Thyroid gland (tissue), 4 donors: ENCODE measurements at regions of chr12 and their contacts with region 1.

Region 1: DNA sequence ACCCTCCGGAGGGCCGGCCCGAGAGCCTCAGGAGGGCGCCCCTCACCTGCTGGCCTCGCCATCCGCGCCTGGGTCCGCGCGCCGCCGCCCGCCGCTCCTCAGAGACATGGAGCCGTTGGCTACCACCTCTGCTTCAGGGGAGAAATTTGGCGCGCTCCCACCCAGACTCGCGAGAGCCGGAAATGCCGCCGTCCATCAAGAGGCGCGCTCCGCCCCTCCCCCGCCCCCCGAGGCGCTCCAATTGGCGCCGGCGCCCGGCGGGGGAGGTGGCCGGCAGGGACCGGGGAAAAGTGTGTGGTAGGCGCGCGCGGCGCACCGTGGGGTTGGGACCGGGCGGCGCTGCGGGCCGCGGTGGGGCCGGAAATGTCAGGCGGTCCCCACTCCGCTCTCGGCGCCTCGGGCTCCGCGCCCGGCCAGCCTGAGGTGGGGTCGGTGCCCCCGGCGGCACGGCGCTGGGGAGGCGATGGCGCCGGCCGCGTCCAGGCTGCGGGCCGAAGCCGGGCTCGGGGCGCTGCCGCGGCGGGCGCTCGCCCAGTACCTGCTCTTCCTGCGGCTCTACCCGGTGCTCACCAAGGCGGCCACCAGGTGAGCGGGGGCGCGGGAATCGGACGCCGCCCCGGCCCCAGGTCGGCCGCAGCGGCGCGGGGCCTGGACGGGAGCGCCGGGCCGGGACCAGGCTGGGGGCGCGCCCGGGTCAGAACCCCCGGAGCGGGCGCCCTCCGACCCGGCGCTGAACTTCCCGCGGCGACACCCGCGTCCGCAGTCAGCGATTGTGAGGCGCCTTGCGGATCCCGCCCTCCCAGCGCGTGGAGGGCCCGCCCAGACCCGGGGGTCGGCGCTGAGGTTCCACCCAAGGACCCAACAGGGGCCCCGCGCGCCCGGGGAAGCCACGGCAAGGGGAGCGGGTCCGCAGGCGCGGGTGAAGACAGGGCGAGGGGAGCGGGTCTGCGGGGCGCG is at the starts of genes POLE and PXMP2:
- DNase-seq: peak; percentile 97 to 98
- H3K4me3 ChIP-seq: peak within 1 kb of the TSS; percentile 66 to 90 (median 75)
- H3K27ac ChIP-seq: no peak within 1 kb of the TSS
- H3K4me1 ChIP-seq: peaks cover 6% of the 10 kb centered on the region in 2 donors
- H3K27me3 ChIP-seq: no peaks in the 10 kb centered on the region
- CTCF ChIP-seq: peak in 3 of 6 experiments; percentile 17 to 32 (median 23)
- POLR2A ChIP-seq: peak in 1 of 2 donors; percentile 62
- total RNA-seq, gene POLE: 19.2 to 28.1 (median 23.9) TPM
- total RNA-seq, gene PXMP2: 25.7 to 57.6 (median 38.4) TPM

Region 2: DNA sequence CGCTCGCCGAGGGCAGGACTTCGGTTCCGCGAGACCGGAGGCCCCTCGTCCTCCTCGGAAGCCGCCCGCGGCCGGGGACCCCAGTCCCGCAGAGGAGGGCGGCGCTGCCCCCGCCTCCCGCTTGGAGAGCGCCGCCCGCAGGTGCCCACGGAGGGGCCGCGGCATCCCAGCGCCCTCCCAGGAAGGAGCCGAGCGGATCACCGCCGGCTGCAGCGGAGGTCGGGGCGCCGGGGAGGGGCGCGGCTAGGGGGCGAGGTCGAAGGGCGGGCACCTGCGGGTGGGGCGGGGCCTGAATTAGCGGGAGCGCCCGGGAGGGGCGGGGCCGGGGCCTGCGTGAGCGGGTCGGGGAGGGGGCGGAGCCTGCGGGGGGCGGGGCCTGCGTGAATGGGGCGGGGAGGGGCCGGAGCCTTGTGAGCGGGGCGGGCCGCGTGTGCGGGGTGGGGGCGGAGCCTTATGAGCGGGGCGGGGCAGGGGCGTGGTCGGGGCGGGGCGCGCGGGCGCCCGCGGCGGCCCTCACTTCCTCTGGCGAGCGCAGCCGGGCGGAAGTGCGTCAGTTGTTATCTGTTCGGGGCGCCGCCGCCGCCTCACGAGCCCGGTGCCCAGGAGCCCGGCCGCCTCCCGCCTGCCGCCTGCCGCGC is 197.8 kb before region 1 on chr12 and contains the start of gene FBRSL1:
- intact Hi-C with region 1: loop called (anchors 5 kb)
- DNase-seq: peak; percentile 83 to 85
- H3K4me3 ChIP-seq: peak within 1 kb of the TSS; percentile 44 to 86 (median 75)
- H3K27ac ChIP-seq: peak within 1 kb of the TSS in 2 of 3 donors; percentile 41 to 74
- H3K4me1 ChIP-seq: peaks cover 31 to 38% of the 10 kb centered on the region in 2 donors
- H3K27me3 ChIP-seq: no peaks in the 10 kb centered on the region
- CTCF ChIP-seq: no peak
- POLR2A ChIP-seq: peak in 1 of 2 donors; percentile 60
- total RNA-seq, gene FBRSL1: 9.2 to 19.7 (median 12.0) TPM